Pancreas (tissue), 10 donors: ENCODE measurements at regions of chr21 and their contacts with region 1.

Region 1: DNA sequence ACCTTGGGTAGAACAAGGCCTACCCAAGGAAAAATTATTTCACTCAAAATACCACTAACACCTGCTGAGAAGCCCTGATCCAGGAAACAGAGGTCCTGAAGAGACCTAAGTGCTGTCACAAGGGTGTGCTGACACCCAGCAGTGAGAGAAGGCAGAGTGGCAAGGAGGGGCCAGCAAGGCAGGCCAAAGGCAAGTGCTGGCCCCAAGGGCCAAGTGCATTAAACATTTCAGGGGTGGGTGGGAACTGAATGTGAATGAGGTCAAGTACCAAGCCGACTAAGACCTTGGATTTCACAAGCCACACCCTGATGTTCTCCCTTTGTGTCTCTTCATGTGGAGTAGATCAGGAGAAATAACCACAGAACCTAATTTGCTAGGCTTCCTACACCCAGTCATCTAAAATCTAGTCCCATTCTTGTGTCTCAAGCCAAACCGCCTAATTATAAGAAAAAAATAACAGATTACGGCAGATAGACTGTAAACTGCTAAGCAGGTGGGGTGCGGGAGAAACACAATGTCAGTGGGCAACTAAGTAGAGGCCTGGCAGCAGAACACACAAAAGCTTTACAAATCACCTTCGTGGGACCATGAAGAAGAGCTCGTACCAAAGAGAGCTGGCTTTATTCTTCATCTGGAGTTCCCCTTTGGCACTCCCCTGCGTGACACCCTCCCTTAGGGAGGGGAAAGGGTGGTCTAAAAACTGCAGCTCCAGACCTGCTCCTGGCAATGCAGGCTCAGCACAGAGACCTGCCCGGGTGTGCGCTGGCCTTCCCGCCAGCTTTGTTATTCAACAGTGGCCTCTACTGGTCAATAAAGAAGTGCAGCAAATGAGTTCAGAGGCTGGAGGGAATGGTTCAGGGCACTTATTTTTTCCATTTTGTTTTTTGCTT is 8.7 kb downstream of the UBE2G2 start:
- DNase-seq: peak in 4 of 6 donors; percentile 37 to 58 (median 51)
- ATAC-seq: peak; percentile 88 to 100 (median 98)
- H3K4me3 ChIP-seq: no peak overlapping the region
- H3K27ac ChIP-seq: no peak overlapping the region
- H3K4me1 ChIP-seq: peaks cover 3 to 17% (median 12%) of the 10 kb centered on the region in 3 donors
- H3K27me3 ChIP-seq: no peaks in the 10 kb centered on the region
- CTCF ChIP-seq: peak; percentile 53 to 74 (median 64)

Region 2: DNA sequence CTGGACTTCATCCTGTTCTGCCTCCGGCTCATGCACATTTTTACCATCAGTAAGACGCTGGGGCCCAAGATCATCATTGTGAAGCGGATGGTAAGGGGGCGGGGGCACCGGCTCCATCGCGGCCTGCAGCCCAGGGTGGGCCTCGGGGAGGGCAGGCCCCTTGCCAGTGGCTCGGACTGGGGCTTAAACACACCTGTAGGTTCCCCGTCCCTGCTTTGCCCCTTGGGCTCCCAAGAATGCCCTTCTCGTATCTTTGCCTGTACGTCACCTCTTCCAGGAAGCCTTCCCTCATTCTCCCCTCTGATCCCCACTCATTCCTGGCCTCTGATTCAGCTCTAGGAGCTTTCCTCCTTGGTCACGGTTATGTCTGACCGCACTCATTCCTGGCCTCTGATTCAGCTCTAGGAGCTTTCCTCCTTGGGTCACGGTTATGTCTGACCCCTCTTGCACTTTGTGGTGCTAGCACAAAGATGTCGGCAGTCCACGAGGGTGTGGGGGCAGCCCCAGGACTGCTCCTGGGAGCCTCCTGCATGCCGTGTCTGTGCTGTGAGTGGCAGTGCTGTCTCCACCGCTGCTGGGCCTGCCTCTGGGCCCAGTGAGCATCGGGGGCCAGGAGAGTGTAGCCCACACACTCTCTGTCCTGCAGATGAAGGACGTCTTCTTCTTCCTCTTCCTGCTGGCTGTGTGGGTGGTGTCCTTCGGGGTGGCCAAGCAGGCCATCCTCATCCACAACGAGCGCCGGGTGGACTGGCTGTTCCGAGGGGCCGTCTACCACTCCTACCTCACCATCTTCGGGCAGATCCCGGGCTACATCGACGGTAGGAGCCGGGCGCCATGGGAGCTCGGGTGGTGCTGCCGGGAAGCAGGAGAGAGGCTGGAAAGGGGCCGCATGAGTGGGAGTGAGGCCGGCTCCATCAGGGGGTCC is 386.7 kb before region 1 on chr21:
- intact Hi-C with region 1: no loop called
- DNase-seq: peak in 1 of 6 donors; percentile 71
- ATAC-seq: no peak
- H3K4me3 ChIP-seq: no peak overlapping the region
- H3K27ac ChIP-seq: no peak overlapping the region
- H3K4me1 ChIP-seq: no peaks in the 10 kb centered on the region
- H3K27me3 ChIP-seq: no peaks in the 10 kb centered on the region
- CTCF ChIP-seq: no peak

Region 3: GRCh38 chr21:44510508-44511210 is 282.3 kb before region 1 on chr21:
- intact Hi-C with region 1: loop called in 2 of 3 experiments (anchors 5 to 10 kb)
- DNase-seq: peak; percentile 63 to 93 (median 78)
- ATAC-seq: peak; percentile 82 to 92 (median 84)
- H3K4me3 ChIP-seq: peak overlapping the region in 2 of 4 donors; percentile 6 to 34
- H3K27ac ChIP-seq: no peak overlapping the region
- H3K4me1 ChIP-seq: peaks cover 0 to 9% (median 5%) of the 10 kb centered on the region in 3 donors
- H3K27me3 ChIP-seq: no peaks in the 10 kb centered on the region
- CTCF ChIP-seq: peak; percentile 81 to 89 (median 85)